Aorta (tissue), 5 donors: ENCODE measurements at regions of chr4 and their contacts with region 1.

Region 1: DNA sequence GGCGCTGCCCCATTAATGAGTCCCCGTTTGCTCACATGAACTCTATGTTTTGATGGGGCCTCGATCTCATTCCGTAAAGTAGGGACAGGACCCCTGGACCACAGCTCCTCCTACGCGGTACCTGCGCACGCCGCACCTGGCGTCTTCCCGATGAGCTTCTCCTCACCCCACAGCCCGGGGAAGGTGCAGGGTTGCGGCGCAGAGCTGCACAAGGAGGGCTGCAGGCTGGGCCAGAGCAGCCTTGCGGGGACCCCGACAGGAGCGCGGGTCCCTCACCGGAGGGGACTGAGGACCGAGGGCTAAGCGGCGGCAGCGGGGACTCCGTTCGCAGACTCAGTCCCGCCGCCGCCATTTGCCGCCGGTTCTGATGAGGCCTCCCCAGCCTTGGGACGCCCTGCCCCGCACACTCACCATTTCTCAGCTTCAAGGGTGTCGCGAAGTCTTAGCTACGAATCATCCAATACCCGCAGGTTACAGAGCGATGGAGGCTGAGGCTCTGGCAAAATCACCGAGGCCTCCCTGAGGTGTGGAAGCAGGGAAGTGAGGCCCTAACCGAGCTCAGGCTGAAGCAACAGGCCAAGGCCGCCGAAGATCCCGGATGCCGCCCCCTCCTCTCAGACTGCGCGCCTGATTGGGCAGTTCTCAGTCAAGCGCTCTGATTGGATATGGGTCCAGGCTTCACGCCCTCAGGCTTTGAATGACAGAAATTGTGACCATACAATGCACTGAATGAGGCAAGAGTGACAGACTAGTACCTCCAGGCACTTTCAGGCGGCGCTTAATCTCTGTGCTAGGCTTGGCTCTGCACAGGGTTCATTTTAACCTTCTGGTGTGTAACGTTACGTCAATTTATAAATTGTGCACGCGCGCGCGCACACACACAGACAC is 25.1 kb downstream of the ZNF721 start:
- DNase-seq: peak; percentile 95 to 97
- ATAC-seq: peak; percentile 100
- H3K4me3 ChIP-seq: peak overlapping the region; percentile 38 to 87
- H3K27ac ChIP-seq: peak overlapping the region in 1 of 2 donors; percentile 65
- H3K4me1 ChIP-seq: no peaks in the 10 kb centered on the region
- H3K27me3 ChIP-seq: no peaks in the 10 kb centered on the region

Region 2: GRCh38 chr4:212438-213188 is 261.2 kb before region 1 on chr4:
- intact Hi-C with region 1: loop called in 1 of 2 experiments (anchors 5 kb)
- DNase-seq: peak; percentile 87 to 92
- ATAC-seq: peak; percentile 95
- H3K4me3 ChIP-seq: peak overlapping the region; percentile 44 to 59
- H3K27ac ChIP-seq: peak overlapping the region in 1 of 2 donors; percentile 3
- H3K4me1 ChIP-seq: no peaks in the 10 kb centered on the region
- H3K27me3 ChIP-seq: no peaks in the 10 kb centered on the region

Region 3: DNA sequence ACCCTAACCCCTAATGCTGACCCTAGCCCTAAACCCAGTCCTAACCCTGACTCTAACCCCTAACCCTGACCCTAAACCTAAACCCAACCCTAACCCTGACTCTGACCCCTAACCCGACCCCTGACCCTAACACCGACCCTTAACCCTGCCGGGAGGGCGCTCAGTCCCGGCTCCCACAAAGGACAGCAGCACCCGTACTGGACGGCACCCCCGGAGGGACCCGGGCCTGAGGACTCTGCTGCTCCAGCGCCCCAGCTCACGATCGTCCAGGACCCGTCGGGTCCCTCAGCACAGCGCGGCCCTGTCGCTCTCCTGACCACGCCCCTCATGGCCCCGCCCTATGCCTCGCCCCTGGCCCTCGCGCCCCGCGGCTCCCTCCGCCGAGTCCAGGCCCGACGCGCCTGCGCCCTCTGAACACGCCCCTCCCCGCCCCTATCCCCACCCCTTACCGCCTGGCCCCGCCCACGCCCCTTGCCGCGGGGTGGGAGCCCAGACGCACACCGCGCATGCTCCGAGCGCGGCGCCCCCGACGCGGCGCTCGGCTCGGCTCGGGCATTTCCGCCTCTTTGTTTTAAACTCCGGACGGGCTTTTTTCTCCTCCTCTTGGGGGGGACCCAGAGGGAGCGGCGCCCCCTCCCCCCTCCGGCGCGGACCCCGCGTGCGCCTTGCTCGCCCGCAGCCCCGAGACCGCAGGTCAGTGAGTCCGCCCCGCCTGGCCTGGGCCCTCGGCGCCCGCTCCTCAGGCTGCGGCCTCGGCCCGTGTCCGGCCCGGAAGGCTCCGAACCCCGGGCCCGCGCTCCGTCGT is 231.7 kb after region 1 on chr4 and contains the start of gene PCGF3:
- intact Hi-C with region 1: no loop called
- DNase-seq: peak; percentile 98 to 100
- ATAC-seq: peak; percentile 97
- H3K4me3 ChIP-seq: peak within 1 kb of the TSS; percentile 74 to 86
- H3K27ac ChIP-seq: no peak within 1 kb of the TSS
- H3K4me1 ChIP-seq: no peaks in the 10 kb centered on the region
- H3K27me3 ChIP-seq: no peaks in the 10 kb centered on the region
- total RNA-seq, gene PCGF3: 35.7 to 59.4 TPM